ENCODE measurements at regions of chr11 and their contacts with region 1.

Region 1: GRCh38 chr11:119381181-119381988 is at the start of gene USP2:
- DNase-seq: peak; percentile 98
- ATAC-seq: peak; percentile 69 to 83
- H3K4me3 ChIP-seq: peak within 1 kb of the TSS; percentile 56 to 73 (median 62)
- H3K27ac ChIP-seq: peak within 1 kb of the TSS; percentile 96 to 99 (median 98)
- H3K4me1 ChIP-seq: peaks cover 42 to 45% of the 10 kb centered on the region in 2 donors
- H3K27me3 ChIP-seq: no peaks in the 10 kb centered on the region
- CTCF ChIP-seq: peak; percentile 81 to 97 (median 94)
- POLR2A ChIP-seq: peak; percentile 91 to 93
- total RNA-seq, gene USP2: 19.4 to 105 (median 46.0) TPM

Region 2: DNA sequence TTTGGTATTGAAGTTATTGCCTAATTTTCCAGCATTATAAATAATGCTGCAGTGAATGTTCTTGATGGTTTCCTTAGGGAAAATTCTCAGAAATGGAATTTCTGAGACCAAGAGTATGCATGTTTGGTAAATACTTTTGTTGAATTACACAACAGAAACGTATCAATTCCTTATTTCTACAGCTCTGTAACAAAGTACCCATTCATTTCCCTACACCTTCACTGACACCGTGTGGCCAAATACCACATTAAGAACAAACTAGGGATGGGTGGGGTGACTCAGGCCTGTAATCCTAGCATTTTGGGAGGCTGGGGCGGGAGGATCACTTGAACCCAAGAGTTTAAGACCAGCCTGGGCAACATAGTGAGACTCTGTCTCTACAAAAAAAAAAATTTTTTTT is 86.2 kb before region 1 on chr11:
- in situ Hi-C with region 1: no loop called
- intact Hi-C with region 1: loop called (anchors 2 kb)
- DNase-seq: no peak
- ATAC-seq: no peak
- H3K4me3 ChIP-seq: no peak overlapping the region
- H3K27ac ChIP-seq: no peak overlapping the region
- H3K4me1 ChIP-seq: peaks cover 27 to 33% of the 10 kb centered on the region in 2 donors
- H3K27me3 ChIP-seq: no peaks in the 10 kb centered on the region
- CTCF ChIP-seq: no peak
- POLR2A ChIP-seq: no peak

Region 3: DNA sequence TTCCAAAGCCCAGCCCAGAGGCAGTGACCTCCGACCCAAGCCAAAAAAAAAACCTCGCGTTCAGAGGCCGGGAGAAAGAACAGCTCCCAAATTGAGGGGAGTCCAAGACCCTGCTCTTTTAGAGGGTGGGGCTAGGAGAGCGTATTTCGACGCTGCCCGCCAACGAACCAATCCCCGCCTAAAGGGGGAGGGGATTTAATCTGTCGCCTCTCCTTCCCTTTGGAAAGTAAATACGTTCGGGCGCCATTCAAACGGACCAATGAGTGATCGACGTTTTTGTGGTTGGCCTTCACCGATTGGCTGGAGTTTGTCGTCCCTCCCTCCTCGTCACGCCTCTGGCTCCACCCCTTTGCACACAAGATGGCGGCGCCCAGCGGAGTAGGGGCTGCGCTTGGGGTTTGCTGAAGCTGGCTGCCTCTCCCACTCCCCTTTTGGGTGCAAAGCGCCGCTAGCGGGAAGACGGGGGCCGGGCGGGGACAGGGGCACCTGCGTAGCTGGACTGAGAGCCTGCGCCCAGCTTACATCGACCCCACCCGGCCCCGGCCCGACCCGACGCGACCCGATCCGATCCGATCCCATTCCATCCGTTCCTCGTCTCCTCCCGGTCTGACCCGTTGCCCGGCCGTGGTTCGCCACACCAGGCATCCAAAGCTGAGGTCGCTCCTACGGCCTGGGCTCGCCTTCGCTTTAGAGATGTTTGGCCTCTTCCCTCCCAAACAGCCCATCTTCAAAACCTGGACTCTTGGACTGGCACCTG is 47.0 kb before region 1 on chr11 and contains the start of gene RNF26:
- in situ Hi-C with region 1: no loop called
- intact Hi-C with region 1: loop called (anchors 2 kb)
- DNase-seq: peak; percentile 98
- ATAC-seq: peak; percentile 97 to 98
- H3K4me3 ChIP-seq: peak within 1 kb of the TSS; percentile 80 to 99 (median 93)
- H3K27ac ChIP-seq: peak within 1 kb of the TSS; percentile 91 to 98 (median 96)
- H3K4me1 ChIP-seq: peaks cover 32 to 38% of the 10 kb centered on the region in 2 donors
- H3K27me3 ChIP-seq: no peaks in the 10 kb centered on the region
- CTCF ChIP-seq: no peak
- POLR2A ChIP-seq: peak; percentile 85 to 86
- total RNA-seq, gene RNF26: 3.8 to 5.1 (median 4.7) TPM

Region 4: DNA sequence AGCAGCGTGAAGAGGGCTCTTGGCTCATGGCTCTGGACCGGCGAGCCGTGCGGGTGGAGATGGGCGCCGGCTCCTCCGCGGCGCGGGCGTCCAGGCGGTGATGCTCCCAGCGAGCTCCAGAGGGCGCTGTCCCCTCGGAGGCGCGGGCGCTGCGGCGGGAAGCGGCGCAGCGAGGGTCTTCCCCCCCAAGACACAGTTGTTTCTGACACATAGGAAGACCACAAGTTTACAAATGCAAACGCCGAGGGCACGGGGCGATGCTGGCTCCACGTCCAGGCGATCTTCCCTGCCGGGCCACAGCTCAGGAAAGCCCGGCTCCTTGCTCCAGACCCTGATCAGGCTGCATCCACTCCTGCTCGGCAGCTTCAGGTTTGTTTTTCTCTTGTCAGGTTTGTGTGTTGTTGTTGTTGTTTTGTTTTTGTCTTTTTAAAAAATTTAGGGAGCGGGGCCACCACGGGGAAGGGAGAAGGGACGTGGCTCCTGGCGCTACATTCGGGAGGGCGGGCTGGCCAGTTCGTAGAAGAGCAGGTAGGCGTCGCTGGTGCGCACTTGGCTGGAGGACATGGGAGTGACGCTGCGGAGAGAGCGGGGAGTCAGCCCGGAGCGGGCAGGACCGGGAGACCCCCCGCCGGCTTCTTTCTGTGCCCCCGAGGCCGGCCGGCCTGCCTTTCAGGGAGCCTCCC is 24.9 kb before region 1 on chr11:
- in situ Hi-C with region 1: no loop called
- intact Hi-C with region 1: loop called (anchors 2 kb)
- DNase-seq: peak in 1 of 2 donors; percentile 80
- ATAC-seq: peak; percentile 38 to 48
- H3K4me3 ChIP-seq: peak overlapping the region; percentile 42 to 56 (median 48)
- H3K27ac ChIP-seq: peak overlapping the region; percentile 96 to 99 (median 98)
- H3K4me1 ChIP-seq: peaks cover 33 to 34% of the 10 kb centered on the region in 2 donors
- H3K27me3 ChIP-seq: no peaks in the 10 kb centered on the region
- CTCF ChIP-seq: peak; percentile 87 to 99 (median 92)
- POLR2A ChIP-seq: peak in 1 of 2 donors; percentile 27

Region 5: DNA sequence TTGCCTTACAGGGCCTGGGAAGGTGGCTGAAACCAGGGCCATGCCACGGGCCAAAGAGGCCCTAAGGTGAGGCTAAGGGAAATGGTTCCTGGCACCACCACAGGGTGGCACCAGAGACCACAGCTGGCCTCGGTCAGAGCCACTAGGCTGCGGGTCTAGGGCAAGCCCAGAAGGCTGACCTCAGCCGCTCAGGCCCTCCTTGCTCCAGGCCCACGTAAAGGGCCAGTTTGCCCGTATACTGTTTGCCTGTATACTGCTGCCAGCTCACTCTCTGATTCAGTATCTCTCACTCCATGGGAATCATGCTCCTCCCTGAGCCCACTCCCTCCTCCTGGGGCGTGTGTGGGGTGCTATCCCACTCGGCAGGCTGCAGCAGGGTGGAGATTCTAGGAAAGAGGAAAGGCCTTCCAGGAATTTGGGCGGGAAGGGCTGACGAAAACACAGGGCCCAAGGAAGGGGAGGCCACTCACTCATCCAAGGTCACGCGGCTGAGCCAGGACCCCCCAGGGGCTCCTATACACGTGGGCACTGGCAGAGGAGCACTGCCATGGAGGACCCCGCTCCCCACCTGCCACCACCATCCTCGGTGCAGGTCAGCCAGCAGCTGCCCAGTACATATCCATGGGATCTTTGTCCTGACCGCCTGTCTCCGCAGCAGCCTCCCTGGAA is 285.2 kb after region 1 on chr11:
- in situ Hi-C with region 1: no loop called
- intact Hi-C with region 1: no loop called
- DNase-seq: peak; percentile 36 to 61
- ATAC-seq: peak; percentile 82 to 93
- H3K4me3 ChIP-seq: no peak overlapping the region
- H3K27ac ChIP-seq: no peak overlapping the region
- H3K4me1 ChIP-seq: peaks cover 0 to 4% of the 10 kb centered on the region in 2 donors
- H3K27me3 ChIP-seq: no peaks in the 10 kb centered on the region
- CTCF ChIP-seq: peak; percentile 89 to 95 (median 94)
- POLR2A ChIP-seq: no peak